Activated T-helper 1 cell treated with anti-CD3 and anti-CD28 coated beads, Interleukin-12 subunit alpha, Interleukin-12 subunit beta, Interleukin-2, Interleukin-4 antibody, amounts not matched to agents 30 ng/mL and 10 ng/mL and 1 ng/mL, durations not matched to agents 14 hours and 24 hours and 36 hours (primary cell): ENCODE measurements at regions of chr6 and their contacts with region 1.

Region 1: GRCh38 chr6:7073821-7074525 is 33.8 kb upstream of the RREB1 start:
- DNase-seq: peak; percentile 55
- H3K4me3 Mint-ChIP-seq: no peak overlapping the region
- H3K27ac Mint-ChIP-seq: peak overlapping the region; percentile 74
- H3K4me1 Mint-ChIP-seq: peaks cover 13% of the 10 kb centered on the region
- H3K27me3 Mint-ChIP-seq: peaks cover 70% of the 10 kb centered on the region

Region 2: DNA sequence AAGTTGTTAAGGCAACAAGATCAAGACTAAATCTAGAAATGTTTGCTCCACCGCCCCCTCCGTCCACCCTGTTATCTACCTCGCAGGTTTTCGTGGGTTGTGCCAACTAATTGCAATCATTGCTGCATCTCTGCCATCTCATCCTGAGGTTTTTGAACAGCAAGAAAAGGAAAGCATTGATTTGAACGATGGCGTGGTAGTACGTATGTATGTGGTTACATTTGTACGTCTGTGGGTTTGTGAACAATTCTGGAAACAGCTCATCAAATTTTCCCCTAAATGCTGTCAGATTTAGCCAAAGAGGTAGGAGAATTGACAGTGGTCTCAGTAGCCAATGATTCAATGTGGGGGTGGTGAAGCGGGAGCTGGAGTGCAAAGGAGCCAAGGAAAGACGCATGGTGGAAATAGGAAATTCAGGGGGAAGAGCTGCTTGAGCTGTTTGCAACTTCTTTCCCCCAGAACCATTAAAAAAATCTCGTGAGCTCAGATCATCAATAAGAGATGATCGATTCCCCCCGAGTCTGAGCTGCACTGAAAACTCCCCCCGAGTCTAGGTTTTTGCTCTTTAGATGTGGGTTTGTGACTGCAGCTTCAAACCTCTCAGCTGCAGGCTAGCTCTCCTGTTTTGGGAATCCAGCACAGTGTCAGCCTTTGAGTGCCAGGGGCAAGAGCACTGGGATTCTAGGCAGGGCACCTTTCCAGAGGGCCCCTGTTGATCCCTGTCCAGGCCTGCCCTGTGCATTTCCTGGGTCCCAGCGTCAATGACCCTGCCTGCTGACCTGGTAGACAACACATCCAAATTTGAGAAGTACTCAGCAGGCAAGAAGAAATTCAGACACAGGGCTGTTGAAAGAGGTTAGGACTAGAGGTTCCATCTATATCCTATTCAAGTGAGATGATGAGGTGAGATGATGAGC is 558.0 kb before region 1 on chr6:
- intact Hi-C with region 1: loop called (anchors 2 kb)
- DNase-seq: peak; percentile 38
- H3K4me3 Mint-ChIP-seq: no peak overlapping the region
- H3K27ac Mint-ChIP-seq: peak overlapping the region; percentile 21
- H3K4me1 Mint-ChIP-seq: peaks cover 18% of the 10 kb centered on the region
- H3K27me3 Mint-ChIP-seq: peaks cover 80% of the 10 kb centered on the region

Region 3: GRCh38 chr6:7051233-7052114 is 22.5 kb before region 1 on chr6:
- intact Hi-C with region 1: loop called (anchors 2 kb)
- DNase-seq: peak; percentile 4
- H3K4me3 Mint-ChIP-seq: no peak overlapping the region
- H3K27ac Mint-ChIP-seq: no peak overlapping the region
- H3K4me1 Mint-ChIP-seq: peaks cover 7% of the 10 kb centered on the region
- H3K27me3 Mint-ChIP-seq: peaks cover 59% of the 10 kb centered on the region

Region 4: DNA sequence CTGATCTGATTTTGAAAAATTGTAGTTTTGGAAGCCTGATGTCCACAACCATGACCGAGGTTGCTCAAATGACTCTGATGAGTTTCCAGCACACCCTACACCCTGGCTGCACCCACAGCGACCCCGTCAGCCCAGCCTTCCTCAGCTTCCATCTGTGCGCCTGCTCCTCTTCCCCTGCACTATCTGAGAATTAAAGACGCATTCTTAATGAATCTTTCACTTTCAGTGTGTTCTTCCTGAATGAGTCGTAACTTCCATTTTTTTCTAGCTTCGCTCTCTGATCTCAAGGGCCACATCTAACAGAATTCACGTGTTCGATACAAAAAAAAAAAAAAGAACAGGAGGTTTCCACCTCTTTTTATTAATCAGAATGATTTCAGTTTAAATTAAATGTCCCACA is 12.5 kb after region 1 on chr6:
- intact Hi-C with region 1: loop called (anchors 1 kb)
- DNase-seq: no peak
- H3K4me3 Mint-ChIP-seq: peak overlapping the region; percentile 63
- H3K27ac Mint-ChIP-seq: no peak overlapping the region
- H3K4me1 Mint-ChIP-seq: peaks cover 27% of the 10 kb centered on the region
- H3K27me3 Mint-ChIP-seq: peaks cover 81% of the 10 kb centered on the region

Region 5: GRCh38 chr6:7100072-7100752 is 26.2 kb after region 1 on chr6:
- intact Hi-C with region 1: no loop called
- DNase-seq: no peak
- H3K4me3 Mint-ChIP-seq: no peak overlapping the region
- H3K27ac Mint-ChIP-seq: no peak overlapping the region
- H3K4me1 Mint-ChIP-seq: no peaks in the 10 kb centered on the region
- H3K27me3 Mint-ChIP-seq: peaks cover 58% of the 10 kb centered on the region

Region 6: GRCh38 chr6:7140631-7141378 is 66.8 kb after region 1 on chr6:
- intact Hi-C with region 1: loop called (anchors 2 kb)
- DNase-seq: peak; percentile 78
- H3K4me3 Mint-ChIP-seq: peak overlapping the region; percentile 84
- H3K27ac Mint-ChIP-seq: peak overlapping the region; percentile 84
- H3K4me1 Mint-ChIP-seq: peaks cover 68% of the 10 kb centered on the region
- H3K27me3 Mint-ChIP-seq: no peaks in the 10 kb centered on the region

Region 7: GRCh38 chr6:8335381-8335780 is 1261.4 kb after region 1 on chr6:
- intact Hi-C with region 1: no loop called
- DNase-seq: no peak
- H3K4me3 Mint-ChIP-seq: no peak overlapping the region
- H3K27ac Mint-ChIP-seq: no peak overlapping the region
- H3K4me1 Mint-ChIP-seq: no peaks in the 10 kb centered on the region
- H3K27me3 Mint-ChIP-seq: no peaks in the 10 kb centered on the region